ENCODE measurements at regions of chr17 and their contacts with region 1.

Region 1: DNA sequence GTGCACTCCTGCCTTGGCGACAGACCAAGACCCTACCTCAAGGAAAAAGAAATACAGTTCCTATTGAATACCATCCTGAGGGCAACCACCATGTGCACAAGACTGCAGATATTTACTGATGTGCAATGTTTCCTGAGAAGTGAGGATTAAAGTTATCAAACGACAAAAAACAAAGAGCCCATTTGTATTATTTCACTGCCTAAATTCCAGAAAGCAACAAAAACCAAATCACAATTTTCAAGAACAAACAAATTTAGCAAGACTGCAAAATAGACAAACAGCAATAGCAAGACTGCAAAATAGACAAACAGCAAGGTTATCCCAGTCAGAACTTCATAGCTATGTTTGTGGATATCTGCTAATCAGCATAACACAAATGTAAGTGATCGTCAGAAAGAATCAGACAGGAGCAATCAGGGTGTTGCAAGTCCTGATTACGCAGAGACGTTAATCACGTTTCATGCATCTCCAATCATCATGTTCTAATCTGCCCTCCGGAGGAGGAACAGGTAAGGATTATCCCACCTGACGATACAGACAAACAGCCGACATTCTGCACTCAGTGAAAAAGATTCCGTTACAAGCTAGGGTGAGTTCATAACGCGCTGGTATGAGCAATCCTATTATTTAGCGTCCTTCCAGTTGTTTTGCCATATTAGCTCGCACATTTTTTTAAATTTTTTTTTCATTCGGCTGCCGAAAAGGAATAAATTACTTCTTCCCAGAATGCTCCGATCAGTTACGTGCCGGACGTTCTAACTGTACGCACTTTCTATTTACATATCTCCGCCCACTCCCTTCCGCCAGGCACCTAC is 2.9 kb downstream of the TMEM107 start:
- DNase-seq: peak; percentile 99
- ATAC-seq: peak; percentile 78
- H3K4me3 ChIP-seq: peak overlapping the region; percentile 43 to 57
- H3K27ac ChIP-seq: peak overlapping the region; percentile 69
- H3K4me1 ChIP-seq: peaks cover 22 to 46% of the 10 kb centered on the region in 2 experiments
- H3K27me3 ChIP-seq: no peaks in the 10 kb centered on the region
- CTCF ChIP-seq: no peak
- POLR2A ChIP-seq: peak; percentile 100
- RAD21 ChIP-seq: no peak; the same call in 1 of the 2 replicates

Region 2: GRCh38 chr17:7676533-7676932 is 496.7 kb before region 1 on chr17:
- CTCF ChIA-PET with region 1: no interaction called
- POLR2A ChIA-PET with region 1: no interaction called
- RAD21 ChIA-PET with region 1: no interaction called
- intact Hi-C with region 1: no loop called
- DNase-seq: no peak
- ATAC-seq: no peak
- H3K4me3 ChIP-seq: no peak overlapping the region
- H3K27ac ChIP-seq: no peak overlapping the region
- H3K4me1 ChIP-seq: no peaks in the 10 kb centered on the region
- H3K27me3 ChIP-seq: no peaks in the 10 kb centered on the region
- CTCF ChIP-seq: no peak
- POLR2A ChIP-seq: no peak
- RAD21 ChIP-seq: no peak

Region 3: GRCh38 chr17:8118769-8119580 is 54.3 kb before region 1 on chr17:
- CTCF ChIA-PET with region 1: interaction called, 4 read pairs
- POLR2A ChIA-PET with region 1: interaction called, 43 read pairs
- RAD21 ChIA-PET with region 1: no interaction called
- intact Hi-C with region 1: no loop called
- DNase-seq: peak; percentile 65
- ATAC-seq: peak; percentile 61
- H3K4me3 ChIP-seq: peak overlapping the region; percentile 52 to 59
- H3K27ac ChIP-seq: peak overlapping the region; percentile 83
- H3K4me1 ChIP-seq: peaks cover 22 to 66% of the 10 kb centered on the region in 2 experiments
- H3K27me3 ChIP-seq: no peaks in the 10 kb centered on the region
- CTCF ChIP-seq: peak; percentile 65 to 83 (median 79); a peak in 5 of 6 replicates
- POLR2A ChIP-seq: no peak
- RAD21 ChIP-seq: peak; percentile 58

Region 4: GRCh38 chr17:8131844-8132441 is 41.3 kb before region 1 on chr17:
- CTCF ChIA-PET with region 1: no interaction called
- POLR2A ChIA-PET with region 1: interaction called, 25 read pairs
- RAD21 ChIA-PET with region 1: no interaction called
- intact Hi-C with region 1: no loop called
- DNase-seq: no peak
- ATAC-seq: no peak
- H3K4me3 ChIP-seq: no peak overlapping the region
- H3K27ac ChIP-seq: no peak overlapping the region
- H3K4me1 ChIP-seq: peaks cover 28 to 61% of the 10 kb centered on the region in 2 experiments
- H3K27me3 ChIP-seq: no peaks in the 10 kb centered on the region
- CTCF ChIP-seq: no peak
- POLR2A ChIP-seq: no peak
- RAD21 ChIP-seq: no peak

Region 5: GRCh38 chr17:8156246-8156992 is 16.8 kb before region 1 on chr17:
- CTCF ChIA-PET with region 1: interaction called, 5 read pairs
- POLR2A ChIA-PET with region 1: interaction called, 95 read pairs
- RAD21 ChIA-PET with region 1: interaction called in 1 of 2 experiments, 3 read pairs
- intact Hi-C with region 1: no loop called
- DNase-seq: peak; percentile 100
- ATAC-seq: peak; percentile 66
- H3K4me3 ChIP-seq: peak overlapping the region; percentile 87 to 95
- H3K27ac ChIP-seq: peak overlapping the region; percentile 72
- H3K4me1 ChIP-seq: peaks cover 49 to 94% of the 10 kb centered on the region in 2 experiments
- H3K27me3 ChIP-seq: no peaks in the 10 kb centered on the region
- CTCF ChIP-seq: no peak
- POLR2A ChIP-seq: peak; percentile 41
- RAD21 ChIP-seq: no peak

Region 6: GRCh38 chr17:8209909-8210760 is 36.9 kb after region 1 on chr17 and contains the start of gene AURKB:
- CTCF ChIA-PET with region 1: no interaction called
- POLR2A ChIA-PET with region 1: interaction called, 21 read pairs
- RAD21 ChIA-PET with region 1: no interaction called
- intact Hi-C with region 1: no loop called
- DNase-seq: peak; percentile 92
- ATAC-seq: peak; percentile 77
- H3K4me3 ChIP-seq: peak within 1 kb of the TSS; percentile 78 to 95
- H3K27ac ChIP-seq: peak within 1 kb of the TSS; percentile 92
- H3K4me1 ChIP-seq: peaks cover 25 to 53% of the 10 kb centered on the region in 2 experiments; a peak in 3 of 4 replicates
- H3K27me3 ChIP-seq: no peaks in the 10 kb centered on the region
- CTCF ChIP-seq: no peak
- POLR2A ChIP-seq: peak; percentile 92
- RAD21 ChIP-seq: no peak
- total RNA-seq, gene AURKB: 141 TPM

Region 7: DNA sequence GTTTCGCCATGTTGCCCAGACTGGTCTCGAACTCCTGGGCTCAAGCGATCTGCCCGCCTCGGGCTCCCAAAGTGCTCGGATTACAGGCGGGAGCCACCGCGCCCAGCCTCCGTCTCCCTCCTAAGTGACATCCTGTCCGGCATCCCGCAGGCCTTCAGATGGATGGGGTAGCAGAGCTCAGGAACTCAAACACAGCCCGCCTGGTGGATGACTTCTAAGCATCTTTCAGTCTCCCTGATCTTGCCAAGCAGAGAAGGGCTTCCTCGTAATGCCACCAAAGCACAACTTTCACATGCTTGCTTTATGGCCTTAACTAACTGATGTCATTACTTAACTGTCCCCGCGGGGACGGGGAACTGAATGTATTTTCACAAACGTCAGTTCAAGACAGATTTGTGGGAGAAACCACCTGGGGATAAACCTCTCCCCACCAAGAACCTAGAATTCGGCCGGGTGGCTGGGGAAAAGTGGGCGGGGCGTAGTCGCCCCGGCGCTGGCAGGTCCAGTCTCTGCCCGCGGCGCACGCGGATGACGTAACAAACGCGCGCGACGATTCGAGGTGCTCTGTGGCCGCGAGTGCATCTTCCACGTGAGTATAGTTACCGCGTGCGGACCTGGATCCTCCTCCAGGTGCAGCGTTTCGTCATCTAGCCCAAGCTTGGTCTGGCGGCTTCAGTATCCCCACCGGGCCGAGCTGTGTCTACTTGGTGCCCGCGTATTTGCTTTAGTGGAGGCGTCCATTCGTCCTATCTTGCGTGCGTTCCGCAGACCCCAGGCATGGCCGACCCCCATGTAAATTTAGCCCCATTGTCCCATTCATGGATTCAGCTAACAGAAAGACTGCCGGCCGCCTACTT is 75.7 kb after region 1 on chr17 and contains the start of gene PFAS:
- CTCF ChIA-PET with region 1: no interaction called
- POLR2A ChIA-PET with region 1: interaction called, 16 read pairs
- RAD21 ChIA-PET with region 1: no interaction called
- intact Hi-C with region 1: no loop called
- DNase-seq: peak; percentile 90
- ATAC-seq: peak; percentile 64
- H3K4me3 ChIP-seq: peak within 1 kb of the TSS; percentile 85 to 99
- H3K27ac ChIP-seq: peak within 1 kb of the TSS; percentile 98
- H3K4me1 ChIP-seq: peaks cover 14 to 26% of the 10 kb centered on the region in 2 experiments
- H3K27me3 ChIP-seq: no peaks in the 10 kb centered on the region
- CTCF ChIP-seq: no peak
- POLR2A ChIP-seq: peak; percentile 89
- RAD21 ChIP-seq: no peak
- total RNA-seq, gene PFAS: 80.6 TPM

Measured in HCT116 (cell line).